Caco-2 (cell line): ENCODE measurements at regions of chr18 and their contacts with region 1.

Region 1: GRCh38 chr18:35949903-35950627 is 22.4 kb upstream of the RMP24 start:
- DNase-seq: peak in 1 of 2 experiments; percentile 34
- H3K4me3 ChIP-seq: no peak overlapping the region
- H3K4me3 Mint-ChIP-seq: peak overlapping the region; percentile 44
- H3K27ac Mint-ChIP-seq: no peak overlapping the region
- H3K4me1 ChIP-seq: no peaks in the 10 kb centered on the region
- H3K4me1 Mint-ChIP-seq: no peaks in the 10 kb centered on the region
- H3K27me3 ChIP-seq: no peaks in the 10 kb centered on the region
- H3K27me3 Mint-ChIP-seq: peaks cover 2% of the 10 kb centered on the region
- CTCF ChIP-seq: peak; percentile 63 to 72

Region 2: DNA sequence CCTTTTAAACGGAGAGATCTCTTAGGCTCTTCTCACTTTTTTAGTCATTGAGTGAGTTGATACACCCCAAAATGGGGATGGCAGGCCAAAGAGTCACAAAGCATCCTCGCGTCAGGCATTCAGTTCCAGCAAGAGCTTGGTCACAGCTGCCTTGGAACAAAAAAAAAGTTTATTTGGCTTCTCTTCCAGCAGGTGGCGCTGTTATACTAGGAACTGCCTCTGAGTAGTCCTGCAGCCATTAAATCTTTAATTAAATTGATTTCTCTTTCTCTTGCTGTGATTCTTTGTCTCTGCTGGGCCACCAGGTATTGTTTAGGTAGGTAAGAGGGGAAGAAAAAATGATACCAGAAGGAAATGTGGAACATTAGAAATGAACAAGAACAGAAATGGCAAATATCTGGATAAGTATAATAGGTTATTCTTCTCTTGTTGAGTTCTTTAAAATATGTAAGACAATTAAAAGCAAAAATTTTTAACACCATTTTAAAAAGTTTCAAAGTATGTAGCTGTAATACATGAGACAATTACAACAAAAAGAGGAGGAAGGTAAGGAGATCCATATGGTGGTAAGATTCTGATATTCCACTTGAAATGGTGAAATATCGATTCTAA is 193.5 kb before region 1 on chr18:
- CTCF ChIA-PET with region 1: no interaction called
- POLR2A ChIA-PET with region 1: no interaction called
- intact Hi-C with region 1: loop called (anchors 1 kb)
- DNase-seq: peak in 1 of 2 experiments; percentile 49
- H3K4me3 ChIP-seq: no peak overlapping the region
- H3K4me3 Mint-ChIP-seq: no peak overlapping the region
- H3K27ac Mint-ChIP-seq: no peak overlapping the region
- H3K4me1 ChIP-seq: no peaks in the 10 kb centered on the region
- H3K4me1 Mint-ChIP-seq: no peaks in the 10 kb centered on the region
- H3K27me3 ChIP-seq: no peaks in the 10 kb centered on the region
- H3K27me3 Mint-ChIP-seq: peaks cover 4% of the 10 kb centered on the region
- CTCF ChIP-seq: peak; percentile 28 to 48

Region 3: GRCh38 chr18:36047521-36047920 is 97.5 kb after region 1 on chr18:
- CTCF ChIA-PET with region 1: no interaction called
- POLR2A ChIA-PET with region 1: no interaction called
- intact Hi-C with region 1: no loop called
- DNase-seq: no peak
- H3K4me3 ChIP-seq: no peak overlapping the region
- H3K4me3 Mint-ChIP-seq: no peak overlapping the region
- H3K27ac Mint-ChIP-seq: no peak overlapping the region
- H3K4me1 ChIP-seq: no peaks in the 10 kb centered on the region
- H3K4me1 Mint-ChIP-seq: no peaks in the 10 kb centered on the region
- H3K27me3 ChIP-seq: no peaks in the 10 kb centered on the region
- H3K27me3 Mint-ChIP-seq: no peaks in the 10 kb centered on the region
- CTCF ChIP-seq: no peak